Upper lobe of right lung (tissue), 1 donor: ENCODE measurements at regions of chr5 and their contacts with region 1.

Region 1: DNA sequence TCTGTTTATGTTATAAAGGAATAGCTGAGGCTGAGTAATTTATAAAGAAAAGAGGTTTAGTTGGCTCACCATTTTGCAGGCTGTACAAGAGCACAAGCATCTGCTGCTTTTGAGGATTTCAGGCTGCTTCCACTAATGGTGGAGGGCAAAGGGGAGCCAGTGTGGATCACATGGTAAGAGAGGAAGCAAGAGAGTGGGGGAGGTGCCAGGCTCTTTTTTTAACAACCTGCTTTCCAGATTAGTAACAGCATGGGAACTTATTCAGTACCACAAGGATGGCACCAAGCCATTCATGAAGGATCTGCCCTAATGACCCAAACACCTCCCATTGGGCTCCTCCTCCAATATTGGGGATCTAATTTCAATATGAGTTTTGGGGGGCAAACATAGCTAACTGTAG is 40.4 kb downstream of the CCL28 start:
- DNase-seq: no peak
- ATAC-seq: peak; percentile 36
- H3K4me3 ChIP-seq: no peak overlapping the region
- H3K27ac ChIP-seq: no peak overlapping the region
- H3K4me1 ChIP-seq: no peaks in the 10 kb centered on the region
- H3K27me3 ChIP-seq: no peaks in the 10 kb centered on the region
- CTCF ChIP-seq: no peak

Region 2: DNA sequence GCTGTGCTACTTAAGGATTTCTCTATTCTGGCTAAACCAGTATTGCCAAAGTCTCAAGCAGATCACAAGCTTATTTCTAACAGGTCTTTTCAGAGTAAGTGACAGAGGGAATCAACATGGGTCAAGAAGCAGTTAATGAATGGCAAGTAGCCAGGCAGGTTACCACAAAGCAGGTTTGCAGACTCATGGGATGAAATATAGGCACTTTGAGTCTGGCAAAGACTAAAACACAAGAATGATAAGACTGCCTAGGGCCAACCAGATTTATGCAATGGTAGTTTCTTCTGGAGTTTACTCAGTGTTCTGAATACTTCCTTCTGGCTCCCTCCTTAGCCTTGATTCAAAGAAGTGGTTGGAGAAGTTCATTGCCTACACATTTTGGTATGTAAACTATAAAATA is 62.2 kb before region 1 on chr5:
- intact Hi-C with region 1: loop called (anchors 2 kb)
- DNase-seq: no peak
- ATAC-seq: no peak
- H3K4me3 ChIP-seq: peak overlapping the region; percentile 90
- H3K27ac ChIP-seq: no peak overlapping the region
- H3K4me1 ChIP-seq: peaks cover 8% of the 10 kb centered on the region
- H3K27me3 ChIP-seq: no peaks in the 10 kb centered on the region
- CTCF ChIP-seq: no peak